ENCODE measurements at regions of chr12 and their contacts with region 1.

Region 1: GRCh38 chr12:52221912-52222457 is 11.1 kb upstream of the KRT7 start:
- H3K4me3 Mint-ChIP-seq: no peak overlapping the region
- H3K27ac Mint-ChIP-seq: no peak overlapping the region
- H3K4me1 Mint-ChIP-seq: peaks cover 35% of the 10 kb centered on the region
- H3K27me3 Mint-ChIP-seq: peaks cover 14% of the 10 kb centered on the region

Region 2: GRCh38 chr12:51923501-51924271 is 298.3 kb before region 1 on chr12:
- intact Hi-C with region 1: no loop called
- H3K4me3 Mint-ChIP-seq: peak overlapping the region; percentile 14
- H3K27ac Mint-ChIP-seq: peak overlapping the region; percentile 71
- H3K4me1 Mint-ChIP-seq: peaks cover 48% of the 10 kb centered on the region
- H3K27me3 Mint-ChIP-seq: peaks cover 22% of the 10 kb centered on the region

Region 3: DNA sequence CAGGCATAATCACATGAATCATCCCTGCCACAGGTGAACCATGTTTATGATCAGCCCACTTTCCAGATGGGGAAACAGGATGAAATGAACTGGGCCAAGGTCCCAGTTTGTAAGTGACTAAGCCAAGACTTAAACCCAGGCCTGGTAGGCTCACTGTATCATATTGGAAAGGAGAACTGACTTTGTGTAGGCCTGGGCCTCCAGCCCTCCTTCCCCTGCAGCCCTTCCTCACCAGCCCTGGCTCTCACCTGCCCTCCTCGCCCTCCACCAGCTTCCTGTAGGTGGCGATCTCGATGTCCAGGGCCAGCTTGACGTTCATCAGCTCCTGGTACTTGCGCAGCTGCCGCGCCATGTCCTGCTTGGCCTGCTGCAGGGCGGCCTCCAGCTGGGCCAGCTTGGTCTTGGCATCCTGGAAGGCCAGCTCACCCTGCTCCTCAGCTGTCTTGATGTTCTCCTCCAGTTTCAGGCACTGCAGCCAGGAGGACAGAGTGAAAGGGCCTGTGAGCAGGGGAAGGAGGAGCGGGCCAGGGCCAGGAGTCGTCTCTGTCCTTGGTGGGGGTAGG is 50.0 kb before region 1 on chr12:
- intact Hi-C with region 1: no loop called
- H3K4me3 Mint-ChIP-seq: no peak overlapping the region
- H3K27ac Mint-ChIP-seq: no peak overlapping the region
- H3K4me1 Mint-ChIP-seq: peaks cover 23% of the 10 kb centered on the region
- H3K27me3 Mint-ChIP-seq: peaks cover 2% of the 10 kb centered on the region

Region 4: DNA sequence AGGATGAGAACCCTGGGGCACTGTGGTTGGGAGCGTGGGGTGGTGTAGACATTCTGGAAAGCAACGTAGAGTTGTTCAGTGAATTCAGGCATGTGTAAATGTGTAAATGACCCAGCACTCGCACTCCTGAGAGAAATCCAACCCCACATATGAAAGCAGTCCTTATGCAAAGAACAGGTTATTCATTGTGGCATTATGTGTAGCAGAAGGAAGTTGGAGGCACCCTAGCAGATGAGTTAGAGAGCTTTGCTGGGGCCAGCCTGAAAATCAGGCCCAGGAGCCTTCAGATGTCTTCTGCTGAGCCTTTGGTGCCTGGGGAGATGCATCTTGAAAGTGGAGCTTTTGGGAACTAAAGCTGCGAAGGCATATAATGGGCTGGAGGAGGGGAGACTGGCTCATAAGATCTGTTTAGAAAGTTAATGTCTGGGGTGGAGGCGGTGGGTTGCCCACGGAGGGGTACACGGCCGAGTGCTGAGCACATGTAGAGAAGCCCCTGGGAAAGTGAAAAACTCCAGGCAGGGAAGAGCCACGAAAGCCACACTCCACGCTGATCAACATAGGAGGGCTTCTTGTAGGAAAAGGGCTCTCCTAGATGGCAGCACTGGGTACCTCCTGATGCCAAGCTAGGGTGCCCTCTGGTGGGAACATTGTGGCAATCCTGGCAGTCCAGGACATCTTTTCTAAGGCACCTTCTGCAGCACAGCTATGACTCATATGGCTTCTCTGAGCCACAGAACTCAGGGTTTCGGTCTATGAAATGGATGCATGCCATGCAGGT is 105.3 kb after region 1 on chr12:
- intact Hi-C with region 1: loop called (anchors 5 kb)
- H3K4me3 Mint-ChIP-seq: no peak overlapping the region
- H3K27ac Mint-ChIP-seq: no peak overlapping the region
- H3K4me1 Mint-ChIP-seq: peaks cover 5% of the 10 kb centered on the region
- H3K27me3 Mint-ChIP-seq: peaks cover 46% of the 10 kb centered on the region

Measured in dendritic cell treated with granulocyte-macrophage colony-stimulating factor and Interleukin-4, amounts not matched to agents 40 ng/mL and 50 ng/mL, for 4 days (primary cell).